ENCODE measurements at regions of chr21 and their contacts with region 1.

Region 1: GRCh38 chr21:33608559-33608958 is 20.1 kb upstream of the DONSON start:
- DNase-seq: no peak
- H3K4me3 Mint-ChIP-seq: no peak overlapping the region
- H3K27ac Mint-ChIP-seq: no peak overlapping the region
- H3K4me1 Mint-ChIP-seq: no peaks in the 10 kb centered on the region
- H3K27me3 Mint-ChIP-seq: no peaks in the 10 kb centered on the region

Region 2: GRCh38 chr21:33461538-33462250 is 146.9 kb before region 1 on chr21:
- CTCF ChIA-PET with region 1: interaction called, 12 read pairs
- POLR2A ChIA-PET with region 1: no interaction called
- DNase-seq: no peak
- H3K4me3 Mint-ChIP-seq: no peak overlapping the region
- H3K27ac Mint-ChIP-seq: no peak overlapping the region
- H3K4me1 Mint-ChIP-seq: no peaks in the 10 kb centered on the region
- H3K27me3 Mint-ChIP-seq: no peaks in the 10 kb centered on the region

Region 3: DNA sequence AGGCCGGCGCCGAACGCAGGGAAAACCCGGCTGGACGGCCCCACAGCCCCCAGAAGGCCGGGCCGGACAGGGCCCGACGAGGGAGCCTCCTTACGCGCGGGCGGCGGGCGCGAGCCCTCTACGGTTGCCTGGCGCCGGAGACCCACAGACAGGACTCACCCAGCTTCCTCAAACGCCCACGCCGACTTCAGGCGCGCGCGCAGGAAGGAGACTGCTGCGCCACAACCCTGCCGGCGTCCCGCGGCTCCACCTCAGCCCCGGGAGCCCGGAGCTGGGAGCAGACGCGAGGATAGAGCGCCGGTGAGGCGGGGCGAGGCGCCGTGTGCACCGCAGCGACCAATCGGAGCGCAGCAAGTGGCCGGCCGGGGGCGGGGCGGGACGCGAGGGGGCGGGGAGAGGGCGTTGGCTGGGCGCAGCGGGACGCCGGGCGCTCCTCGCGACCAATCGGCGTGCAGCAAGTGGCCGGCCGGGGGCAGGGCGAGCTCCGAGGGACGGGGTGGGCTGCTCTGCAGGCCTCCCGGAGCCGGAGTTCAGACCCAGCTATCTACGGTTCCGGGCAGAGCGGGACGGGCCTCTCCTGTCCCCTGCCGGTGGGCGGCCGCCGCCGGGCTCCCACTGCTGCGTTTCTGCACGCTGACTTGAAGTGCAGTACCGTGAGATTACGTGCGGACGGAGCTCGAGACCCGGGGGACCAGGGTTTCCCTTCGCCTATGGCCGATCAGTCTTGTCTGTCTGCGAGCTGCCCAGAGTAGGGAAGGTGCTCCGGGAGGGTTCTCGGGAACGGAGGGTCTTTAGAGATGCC is 128.7 kb before region 1 on chr21 and contains the start of gene TMEM50B:
- CTCF ChIA-PET with region 1: interaction called, 19 read pairs
- POLR2A ChIA-PET with region 1: no interaction called
- DNase-seq: peak; percentile 96
- H3K4me3 Mint-ChIP-seq: peak within 1 kb of the TSS; percentile 90
- H3K27ac Mint-ChIP-seq: peak within 1 kb of the TSS; percentile 81
- H3K4me1 Mint-ChIP-seq: peaks cover 21% of the 10 kb centered on the region
- H3K27me3 Mint-ChIP-seq: peaks cover 4% of the 10 kb centered on the region
- total RNA-seq, gene TMEM50B: 26.5 to 28.2 TPM

Region 4: DNA sequence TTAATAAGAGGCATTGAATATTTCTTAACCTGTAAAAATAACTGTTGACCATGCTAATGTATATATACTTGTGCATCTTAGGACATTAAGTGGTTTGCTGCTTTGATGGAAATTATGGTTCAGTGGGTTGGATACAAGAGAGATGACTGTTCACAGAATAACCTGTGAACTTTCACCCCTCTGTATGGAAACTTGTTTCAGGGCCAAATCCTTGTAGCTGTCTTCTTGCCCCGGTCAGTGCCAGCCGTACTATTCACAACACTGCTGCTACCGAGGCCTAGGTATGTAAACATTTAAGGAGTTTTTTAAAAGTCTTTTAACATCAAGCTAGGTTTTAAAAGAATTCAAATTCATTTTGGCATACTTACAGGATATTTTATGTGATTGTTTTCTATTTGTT is 36.2 kb before region 1 on chr21:
- CTCF ChIA-PET with region 1: interaction called, 13 read pairs
- POLR2A ChIA-PET with region 1: no interaction called
- DNase-seq: no peak
- H3K4me3 Mint-ChIP-seq: no peak overlapping the region
- H3K27ac Mint-ChIP-seq: no peak overlapping the region
- H3K4me1 Mint-ChIP-seq: peaks cover 25% of the 10 kb centered on the region
- H3K27me3 Mint-ChIP-seq: no peaks in the 10 kb centered on the region

Region 5: GRCh38 chr21:33588485-33589335 is 19.8 kb before region 1 on chr21 and contains the start of gene DONSON:
- CTCF ChIA-PET with region 1: interaction called, 54 read pairs
- POLR2A ChIA-PET with region 1: interaction called, 15 read pairs
- DNase-seq: peak; percentile 89
- H3K4me3 Mint-ChIP-seq: peak within 1 kb of the TSS; percentile 94
- H3K27ac Mint-ChIP-seq: peak within 1 kb of the TSS; percentile 80
- H3K4me1 Mint-ChIP-seq: peaks cover 29% of the 10 kb centered on the region
- H3K27me3 Mint-ChIP-seq: no peaks in the 10 kb centered on the region
- total RNA-seq, gene DONSON: 35.4 to 35.5 TPM

Region 6: DNA sequence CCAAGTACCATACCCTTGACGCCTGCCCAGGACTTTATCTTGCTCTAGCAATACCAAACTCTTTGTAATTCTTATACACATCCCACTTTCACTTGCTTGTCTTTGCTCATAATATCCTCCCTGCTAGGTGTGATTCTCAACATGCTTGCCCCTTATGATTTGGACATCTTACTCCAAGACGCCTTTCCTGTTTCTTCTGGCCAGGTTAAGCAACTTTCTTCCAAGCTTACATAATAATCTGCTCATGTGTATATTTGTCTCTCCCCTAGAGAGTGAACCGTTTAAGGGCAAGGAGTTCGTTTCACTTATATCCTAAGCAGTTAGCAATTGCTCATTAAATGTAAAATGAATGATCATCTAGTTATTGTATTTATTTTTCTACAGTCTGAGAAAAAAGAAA is 11.2 kb after region 1 on chr21:
- CTCF ChIA-PET with region 1: interaction called, 14 read pairs
- POLR2A ChIA-PET with region 1: no interaction called
- DNase-seq: no peak
- H3K4me3 Mint-ChIP-seq: no peak overlapping the region
- H3K27ac Mint-ChIP-seq: no peak overlapping the region
- H3K4me1 Mint-ChIP-seq: no peaks in the 10 kb centered on the region
- H3K27me3 Mint-ChIP-seq: no peaks in the 10 kb centered on the region

Measured in activated CD4-positive, alpha-beta memory T cell treated with anti-CD3 and anti-CD28 coated beads, Interleukin-2, amount 10 ng/mL, durations not matched to agents 7 days and 5 days (primary cell).